Adrenal gland (tissue), 19 donors: ENCODE measurements at regions of chr6 and their contacts with region 1.

Region 1: GRCh38 chr6:138752017-138752416 is 21.6 kb upstream of the CCDC28A start:
- DNase-seq: no peak
- H3K4me3 ChIP-seq: no peak overlapping the region
- H3K27ac ChIP-seq: no peak overlapping the region
- H3K4me1 ChIP-seq: no peaks in the 10 kb centered on the region
- H3K27me3 ChIP-seq: no peaks in the 10 kb centered on the region
- CTCF ChIP-seq: no peak
- POLR2A ChIP-seq: no peak

Region 2: DNA sequence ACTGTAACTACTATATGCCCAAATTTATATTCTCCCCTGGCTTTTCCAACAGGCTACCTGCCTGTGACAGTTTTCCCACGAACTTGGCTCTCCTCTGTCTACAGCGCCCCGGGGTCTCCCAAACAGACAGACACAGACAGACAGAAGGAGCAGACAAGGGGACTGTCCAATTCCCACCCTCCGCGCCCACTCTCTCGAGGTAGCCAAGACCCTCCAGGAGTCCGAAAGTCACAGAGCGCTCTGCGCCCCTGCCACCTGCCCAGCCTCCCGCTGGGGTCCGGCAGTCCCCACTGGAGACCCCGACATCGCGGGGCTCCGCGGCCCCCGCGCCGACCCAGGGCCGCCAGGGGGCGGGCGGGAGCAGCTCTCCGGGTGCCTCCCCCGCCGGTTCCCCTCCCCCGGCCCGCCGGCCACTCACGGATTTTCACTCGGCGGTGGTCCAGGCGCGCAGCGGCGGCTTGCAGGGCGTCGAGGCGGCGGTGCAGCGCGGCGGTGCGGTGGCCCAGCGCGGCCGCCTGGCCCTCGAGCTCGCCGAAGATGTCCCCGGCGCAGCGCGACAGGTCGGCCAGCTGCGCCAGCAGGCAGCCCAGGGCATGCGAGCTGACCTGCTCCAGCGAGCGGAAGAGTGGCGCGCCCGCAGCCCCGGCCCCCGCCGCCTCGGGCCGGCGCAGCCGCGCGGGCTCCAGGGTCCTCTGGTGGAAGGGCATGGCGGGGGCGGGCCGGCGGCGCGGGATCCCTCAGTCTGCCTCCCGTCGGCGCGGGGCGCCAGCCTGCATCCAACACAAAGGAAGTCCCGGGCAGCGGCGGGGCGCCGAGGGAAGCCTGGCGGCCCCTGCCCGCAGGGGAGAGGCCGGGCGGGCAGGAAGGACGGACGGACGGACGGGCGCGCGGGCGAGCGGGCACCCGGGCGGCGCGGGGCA is 59.7 kb before region 1 on chr6:
- intact Hi-C with region 1: loop called in 1 of 2 experiments (anchors 10 kb)
- DNase-seq: peak; percentile 57 to 76 (median 72)
- H3K4me3 ChIP-seq: peak overlapping the region in 3 of 4 donors; percentile 0 to 99 (median 58)
- H3K27ac ChIP-seq: peak overlapping the region in 4 of 5 donors; percentile 51 to 94 (median 76)
- H3K4me1 ChIP-seq: peaks cover 0 to 5% of the 10 kb centered on the region in 2 donors
- H3K27me3 ChIP-seq: no peaks in the 10 kb centered on the region
- CTCF ChIP-seq: peak; percentile 31 to 91 (median 68)
- POLR2A ChIP-seq: no peak